ENCODE measurements at regions of chr11 and their contacts with region 1.

Region 1: DNA sequence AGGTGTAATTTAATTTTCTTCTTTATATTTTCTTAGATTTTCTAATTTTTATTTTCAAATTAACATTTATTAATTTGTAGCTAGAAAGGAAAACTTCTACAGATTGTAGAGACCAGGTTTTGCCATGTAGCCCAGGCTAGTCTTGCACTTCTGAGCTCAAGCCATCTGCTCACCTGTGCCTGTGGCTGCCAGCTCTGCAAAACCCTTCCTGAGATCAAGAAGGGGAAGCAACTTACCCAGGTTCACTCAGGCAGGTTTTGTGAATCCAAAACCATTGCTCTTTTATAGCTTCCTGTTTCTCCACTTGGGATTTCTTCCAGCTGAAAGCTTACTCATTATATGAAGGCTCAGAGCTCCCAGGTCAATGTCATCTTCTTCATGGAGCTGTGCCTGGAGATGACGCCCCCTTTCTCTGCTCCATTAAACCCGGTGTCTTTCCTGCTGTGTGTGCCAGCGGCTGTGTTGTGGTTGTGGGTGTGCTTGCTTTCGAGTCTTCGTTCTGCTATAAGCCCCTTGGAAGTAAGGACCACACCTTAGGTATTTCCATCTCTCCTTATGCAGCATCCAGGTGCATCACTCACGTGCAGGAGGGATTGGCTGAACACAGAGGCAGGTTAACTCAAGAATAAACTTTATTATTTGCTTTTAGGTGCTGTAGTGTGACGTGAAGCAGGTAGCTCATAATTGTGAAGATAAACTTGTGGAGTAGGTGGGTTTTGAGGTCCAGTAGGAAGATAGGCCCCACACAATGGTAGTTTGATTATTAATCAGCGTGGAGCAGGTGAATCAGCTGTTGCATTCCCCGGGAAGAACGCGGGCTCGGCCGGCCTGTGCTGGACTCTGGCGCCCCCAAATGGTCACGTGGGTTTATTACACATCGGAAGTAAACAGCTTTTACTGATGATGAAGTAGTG is 42.2 kb upstream of the INCENP start:
- DNase-seq: peak; percentile 83
- ATAC-seq: peak; percentile 84

Region 2: DNA sequence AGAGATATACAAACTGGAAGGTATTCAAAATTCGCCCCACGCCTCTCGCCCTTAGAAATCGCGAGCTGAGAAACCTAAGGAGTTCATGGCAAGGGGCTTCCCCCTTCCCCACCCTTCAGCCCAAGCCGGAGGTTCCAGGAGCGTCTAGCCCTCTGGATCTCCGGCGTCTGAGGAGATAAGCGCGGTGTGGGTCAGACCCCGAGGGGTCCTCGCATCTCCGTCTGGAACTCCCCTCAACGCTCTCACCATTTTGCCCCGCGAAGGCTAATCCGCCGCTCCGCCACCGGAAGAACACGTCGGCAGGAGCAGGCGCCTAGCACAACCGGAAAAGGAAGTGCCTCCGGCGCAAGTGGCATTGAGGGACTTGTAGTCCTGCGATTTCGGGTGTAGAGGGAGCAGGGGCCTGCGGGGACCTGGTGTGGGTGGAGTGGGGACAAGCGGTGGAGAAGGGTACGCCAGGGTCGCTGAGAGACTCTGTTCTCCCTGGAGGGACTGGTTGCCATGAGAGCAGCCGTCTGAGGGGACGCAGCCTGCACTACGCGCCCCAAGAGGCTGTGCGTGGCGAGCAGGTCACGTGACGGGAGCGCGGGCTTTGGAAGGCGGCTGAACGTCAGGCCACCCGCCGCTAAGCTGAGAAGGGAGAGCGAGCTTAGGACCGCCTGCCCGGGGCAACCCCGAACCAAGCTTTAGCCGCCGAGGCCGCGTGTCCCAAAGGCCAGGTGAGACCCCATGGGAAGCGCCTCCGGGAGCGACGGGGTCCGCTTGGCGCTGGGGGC is 289.1 kb before region 1 on chr11 and contains the starts of genes FEN1 and TMEM258:
- intact Hi-C with region 1: loop called (anchors 10 kb)
- DNase-seq: peak; percentile 93
- ATAC-seq: peak; percentile 93
- total RNA-seq, gene FEN1: 6.4 TPM
- total RNA-seq, gene TMEM258: 130 TPM

Region 3: GRCh38 chr11:61947486-61948210 is 134.0 kb before region 1 on chr11:
- intact Hi-C with region 1: loop called (anchors 5 kb)
- DNase-seq: peak; percentile 89
- ATAC-seq: peak; percentile 79